ENCODE measurements at regions of chr12 and their contacts with region 1.

Region 1: GRCh38 chr12:31959161-31959700 is at the start of gene RESF1:
- DNase-seq: peak; percentile 67 to 89 (median 85)
- ATAC-seq: peak; percentile 88
- H3K4me3 ChIP-seq: peak within 1 kb of the TSS; percentile 91
- H3K4me3 Mint-ChIP-seq: peak within 1 kb of the TSS; percentile 91 to 97 (median 94)
- H3K27ac ChIP-seq: peak within 1 kb of the TSS; percentile 86
- H3K27ac Mint-ChIP-seq: peak within 1 kb of the TSS; percentile 91 to 98 (median 96)
- H3K4me1 ChIP-seq: peaks cover 23 to 49% of the 10 kb centered on the region in 2 donors
- H3K4me1 Mint-ChIP-seq: peaks cover 43 to 74% (median 57%) of the 10 kb centered on the region in 7 donors
- H3K27me3 ChIP-seq: no peaks in the 10 kb centered on the region
- H3K27me3 Mint-ChIP-seq: no peaks in the 10 kb centered on the region
- total RNA-seq, gene RESF1: 141 to 490 (median 161) TPM

Region 2: DNA sequence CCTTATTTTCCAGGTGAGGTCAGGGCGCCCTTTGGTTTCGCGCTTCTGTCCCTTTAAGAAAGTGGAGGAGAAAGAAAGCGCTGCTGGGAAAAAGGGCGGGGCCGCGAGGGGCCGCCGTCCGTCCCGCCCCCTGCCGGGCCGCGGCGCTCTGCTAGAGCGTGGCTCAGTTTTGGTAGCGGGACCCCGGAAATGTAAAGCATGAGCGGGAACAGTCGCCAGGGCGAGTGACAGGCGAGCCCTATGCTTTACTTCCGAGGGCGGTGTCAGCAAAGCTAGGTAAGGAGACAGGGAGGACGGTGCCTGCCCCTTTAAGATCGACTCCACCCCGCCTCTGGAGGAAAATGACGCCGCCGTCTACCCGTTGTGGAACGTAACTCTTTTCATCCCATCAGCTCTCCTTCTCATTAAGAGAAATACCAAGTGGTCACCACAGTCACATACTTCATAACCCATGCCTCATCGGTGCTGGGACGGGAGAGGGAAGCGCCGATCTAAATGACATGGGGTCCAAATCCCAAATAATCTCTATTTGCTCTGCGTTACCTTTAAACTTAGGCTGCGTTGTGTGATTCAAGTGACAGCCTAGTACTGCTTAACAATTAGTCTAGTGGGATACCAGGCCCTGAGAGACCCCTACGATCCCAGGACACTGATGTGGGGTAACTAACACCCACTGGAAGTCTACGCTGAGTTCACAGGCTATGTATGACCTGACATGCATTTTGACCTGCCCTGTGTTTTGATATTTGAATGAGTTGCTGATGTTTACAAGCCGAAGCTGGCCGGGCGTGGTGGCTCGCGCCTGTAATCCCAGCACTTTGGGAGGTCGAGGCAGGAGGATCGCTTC is 299.9 kb before region 1 on chr12 and contains the start of gene ETFBKMT:
- CTCF ChIA-PET with region 1: interaction called, 5 read pairs
- POLR2A ChIA-PET with region 1: interaction called, 33 read pairs
- intact Hi-C with region 1: loop called (anchors 1 kb)
- DNase-seq: peak; percentile 85 to 95 (median 93)
- ATAC-seq: peak; percentile 99
- H3K4me3 ChIP-seq: peak within 1 kb of the TSS; percentile 85
- H3K4me3 Mint-ChIP-seq: peak within 1 kb of the TSS; percentile 81 to 99 (median 96)
- H3K27ac ChIP-seq: peak within 1 kb of the TSS; percentile 90
- H3K27ac Mint-ChIP-seq: peak within 1 kb of the TSS; percentile 91 to 100 (median 97)
- H3K4me1 ChIP-seq: peaks cover 0 to 10% of the 10 kb centered on the region in 2 donors
- H3K4me1 Mint-ChIP-seq: peaks cover 3 to 36% (median 24%) of the 10 kb centered on the region in 7 donors
- H3K27me3 ChIP-seq: no peaks in the 10 kb centered on the region
- H3K27me3 Mint-ChIP-seq: no peaks in the 10 kb centered on the region
- total RNA-seq, gene ETFBKMT: 0.92 to 2.0 (median 1.9) TPM

Region 3: GRCh38 chr12:31749024-31749704 is 210.1 kb before region 1 on chr12:
- CTCF ChIA-PET with region 1: interaction called, 3 read pairs
- POLR2A ChIA-PET with region 1: no interaction called
- intact Hi-C with region 1: loop called in 1 of 2 experiments (anchors 1 kb)
- DNase-seq: peak in 1 of 9 donors; percentile 57
- ATAC-seq: peak; percentile 89
- H3K4me3 ChIP-seq: peak overlapping the region; percentile 34
- H3K4me3 Mint-ChIP-seq: peak overlapping the region in 7 of 10 donors; percentile 21 to 66 (median 38)
- H3K27ac ChIP-seq: no peak overlapping the region
- H3K27ac Mint-ChIP-seq: peak overlapping the region in 8 of 9 donors; percentile 14 to 83 (median 63)
- H3K4me1 ChIP-seq: peaks cover 18 to 20% of the 10 kb centered on the region in 2 donors
- H3K4me1 Mint-ChIP-seq: peaks cover 31 to 76% (median 65%) of the 10 kb centered on the region in 7 donors
- H3K27me3 ChIP-seq: no peaks in the 10 kb centered on the region
- H3K27me3 Mint-ChIP-seq: no peaks in the 10 kb centered on the region

Region 4: DNA sequence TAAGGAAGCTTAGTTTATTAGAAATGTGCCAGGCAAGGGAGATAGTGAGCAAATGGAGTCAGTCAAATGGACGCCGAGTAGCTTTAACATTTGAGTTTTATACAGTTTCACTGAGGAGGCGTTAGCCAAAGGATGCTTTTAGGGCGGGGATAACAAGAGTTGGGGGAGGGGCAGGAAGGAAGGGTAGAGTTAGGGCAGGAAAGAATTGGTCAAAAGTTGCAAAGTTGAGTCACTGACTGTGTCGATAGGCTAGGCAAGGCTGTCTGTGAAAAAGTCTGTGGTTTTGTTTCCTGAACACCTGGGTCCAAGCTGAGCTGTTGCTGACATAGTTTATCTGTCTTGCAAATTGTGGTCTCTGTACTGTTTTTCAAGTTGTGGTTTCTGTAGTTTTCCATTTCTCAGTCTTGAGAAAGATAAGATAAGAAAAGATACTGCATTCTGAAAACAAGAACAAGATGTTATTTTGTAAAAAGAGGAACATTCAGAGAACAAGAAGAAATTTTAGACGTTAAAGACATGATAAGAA is 62.7 kb before region 1 on chr12:
- CTCF ChIA-PET with region 1: interaction called, 7 read pairs
- POLR2A ChIA-PET with region 1: interaction called, 103 read pairs
- intact Hi-C with region 1: loop called (anchors 1 kb)
- DNase-seq: peak; percentile 35 to 96 (median 92)
- ATAC-seq: peak; percentile 97
- H3K4me3 ChIP-seq: no peak overlapping the region
- H3K4me3 Mint-ChIP-seq: peak overlapping the region; percentile 36 to 92 (median 76)
- H3K27ac ChIP-seq: peak overlapping the region; percentile 86
- H3K27ac Mint-ChIP-seq: peak overlapping the region; percentile 92 to 99 (median 97)
- H3K4me1 ChIP-seq: peaks cover 61% of the 10 kb centered on the region in 2 donors
- H3K4me1 Mint-ChIP-seq: peaks cover 33 to 74% (median 51%) of the 10 kb centered on the region in 7 donors
- H3K27me3 ChIP-seq: no peaks in the 10 kb centered on the region
- H3K27me3 Mint-ChIP-seq: peaks cover 0 to 6% (median 0%) of the 10 kb centered on the region in 5 donors

Region 5: DNA sequence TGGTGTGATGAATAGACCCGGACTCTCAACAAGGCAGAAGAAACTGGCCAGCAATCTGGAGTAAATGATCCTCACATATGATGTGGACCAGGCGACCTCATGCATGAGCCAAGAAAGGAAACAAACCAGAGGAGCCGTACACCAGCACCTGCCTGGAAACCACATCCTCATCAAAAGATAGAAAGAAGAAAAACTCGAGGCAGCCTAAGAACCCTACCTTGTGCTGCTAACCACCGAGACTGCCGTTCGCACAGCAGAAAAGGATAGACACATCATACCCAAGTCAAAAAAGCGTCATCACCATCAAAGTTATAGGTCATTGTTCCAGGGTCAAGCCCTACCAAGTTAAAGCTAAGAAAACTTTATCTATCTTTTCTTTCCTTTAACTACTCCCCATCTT is 66.7 kb after region 1 on chr12:
- CTCF ChIA-PET with region 1: no interaction called
- POLR2A ChIA-PET with region 1: interaction called, 8 read pairs
- intact Hi-C with region 1: loop called (anchors 1 kb)
- DNase-seq: peak; percentile 7 to 87 (median 78)
- ATAC-seq: peak; percentile 94
- H3K4me3 ChIP-seq: no peak overlapping the region
- H3K4me3 Mint-ChIP-seq: peak overlapping the region; percentile 14 to 64 (median 40)
- H3K27ac ChIP-seq: peak overlapping the region; percentile 26
- H3K27ac Mint-ChIP-seq: peak overlapping the region; percentile 57 to 92 (median 79)
- H3K4me1 ChIP-seq: peaks cover 12 to 24% of the 10 kb centered on the region in 2 donors
- H3K4me1 Mint-ChIP-seq: peaks cover 9 to 51% (median 37%) of the 10 kb centered on the region in 7 donors
- H3K27me3 ChIP-seq: no peaks in the 10 kb centered on the region
- H3K27me3 Mint-ChIP-seq: no peaks in the 10 kb centered on the region

Region 6: GRCh38 chr12:32265951-32266350 is 306.7 kb after region 1 on chr12:
- CTCF ChIA-PET with region 1: no interaction called
- POLR2A ChIA-PET with region 1: no interaction called
- intact Hi-C with region 1: no loop called
- DNase-seq: no peak
- ATAC-seq: peak; percentile 64
- H3K4me3 ChIP-seq: no peak overlapping the region
- H3K4me3 Mint-ChIP-seq: peak overlapping the region in 1 of 10 donors; percentile 14
- H3K27ac ChIP-seq: no peak overlapping the region
- H3K27ac Mint-ChIP-seq: peak overlapping the region in 1 of 9 donors; percentile 32
- H3K4me1 ChIP-seq: no peaks in the 10 kb centered on the region
- H3K4me1 Mint-ChIP-seq: peaks cover 3 to 18% (median 12%) of the 10 kb centered on the region in 7 donors
- H3K27me3 ChIP-seq: no peaks in the 10 kb centered on the region
- H3K27me3 Mint-ChIP-seq: no peaks in the 10 kb centered on the region

Region 7: GRCh38 chr12:32679091-32679919 is 720.1 kb after region 1 on chr12 and contains the start of gene DNM1L:
- CTCF ChIA-PET with region 1: no interaction called
- POLR2A ChIA-PET with region 1: interaction called, 3 read pairs
- intact Hi-C with region 1: loop called in 1 of 2 experiments (anchors 1 kb)
- DNase-seq: peak; percentile 85 to 93 (median 92)
- ATAC-seq: peak; percentile 99
- H3K4me3 ChIP-seq: peak within 1 kb of the TSS; percentile 83
- H3K4me3 Mint-ChIP-seq: peak within 1 kb of the TSS; percentile 83 to 97 (median 93)
- H3K27ac ChIP-seq: peak within 1 kb of the TSS; percentile 82
- H3K27ac Mint-ChIP-seq: peak within 1 kb of the TSS; percentile 59 to 95 (median 89)
- H3K4me1 ChIP-seq: peaks cover 9 to 11% of the 10 kb centered on the region in 2 donors
- H3K4me1 Mint-ChIP-seq: peaks cover 16 to 39% (median 31%) of the 10 kb centered on the region in 7 donors
- H3K27me3 ChIP-seq: no peaks in the 10 kb centered on the region
- H3K27me3 Mint-ChIP-seq: no peaks in the 10 kb centered on the region
- total RNA-seq, gene DNM1L: 41.6 to 68.4 (median 58.9) TPM

Measured in naive thymus-derived CD4-positive, alpha-beta T cell (primary cell).